ENCODE measurements at regions of chr1 and their contacts with region 1.

Region 1: GRCh38 chr1:151098126-151098525 is 27.6 kb downstream of the GABPB2 start:
- DNase-seq: no peak
- H3K4me3 Mint-ChIP-seq: no peak overlapping the region
- H3K27ac Mint-ChIP-seq: no peak overlapping the region
- H3K4me1 Mint-ChIP-seq: peaks cover 10% of the 10 kb centered on the region
- H3K27me3 Mint-ChIP-seq: no peaks in the 10 kb centered on the region
- CTCF ChIP-seq: no peak

Region 2: GRCh38 chr1:151013518-151013917 is 84.6 kb before region 1 on chr1:
- CTCF ChIA-PET with region 1: no interaction called
- POLR2A ChIA-PET with region 1: no interaction called
- intact Hi-C with region 1: no loop called
- DNase-seq: no peak
- H3K4me3 Mint-ChIP-seq: no peak overlapping the region
- H3K27ac Mint-ChIP-seq: no peak overlapping the region
- H3K4me1 Mint-ChIP-seq: peaks cover 7% of the 10 kb centered on the region
- H3K27me3 Mint-ChIP-seq: no peaks in the 10 kb centered on the region
- CTCF ChIP-seq: no peak

Region 3: DNA sequence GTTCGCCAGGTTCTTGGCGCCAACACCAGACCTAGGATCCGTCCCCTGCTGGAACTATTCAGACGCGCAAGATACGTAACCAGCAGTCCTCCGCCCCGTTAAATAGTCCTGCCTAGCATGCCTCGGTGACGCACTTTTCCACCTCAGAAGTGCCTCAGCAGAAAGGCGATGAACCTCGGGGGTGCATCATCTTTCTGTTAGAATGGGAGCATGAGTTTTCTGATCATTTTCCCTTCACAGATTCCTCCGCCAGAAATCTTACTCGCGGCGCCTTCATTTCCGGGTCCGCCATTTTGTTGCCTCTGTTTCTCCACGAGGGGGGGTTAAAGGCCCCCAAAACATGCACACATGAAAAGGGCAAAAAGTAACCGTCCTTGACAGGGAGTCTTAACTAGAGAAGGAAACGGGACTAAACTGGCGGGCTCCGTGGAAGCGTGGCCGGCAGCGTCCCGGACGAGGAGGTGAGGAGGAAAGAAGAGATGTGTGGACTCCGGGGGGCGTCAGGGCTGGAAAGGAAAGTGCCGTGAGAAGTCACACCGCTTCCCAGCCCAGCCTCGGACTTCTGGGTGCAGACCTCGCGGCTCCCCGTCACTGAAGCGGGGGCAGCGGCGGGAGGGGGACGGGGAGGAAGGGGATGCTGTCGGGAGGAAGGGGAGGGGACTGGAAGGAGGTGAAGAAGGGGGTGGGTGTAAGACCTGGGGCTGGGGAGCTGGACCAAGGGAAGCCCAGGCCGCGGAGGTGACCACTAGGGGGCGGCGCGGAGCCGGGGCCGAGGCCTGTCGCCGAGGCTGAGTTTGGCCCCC is 27.5 kb before region 1 on chr1 and contains the start of gene GABPB2:
- CTCF ChIA-PET with region 1: interaction called, 10 read pairs
- POLR2A ChIA-PET with region 1: interaction called, 4 read pairs
- intact Hi-C with region 1: no loop called
- DNase-seq: peak; percentile 98
- H3K4me3 Mint-ChIP-seq: peak within 1 kb of the TSS; percentile 100
- H3K27ac Mint-ChIP-seq: peak within 1 kb of the TSS; percentile 100
- H3K4me1 Mint-ChIP-seq: no peaks in the 10 kb centered on the region
- H3K27me3 Mint-ChIP-seq: no peaks in the 10 kb centered on the region
- CTCF ChIP-seq: peak; percentile 99
- total RNA-seq, gene GABPB2: 20.2 and 22.9 TPM in 2 replicates

Region 4: GRCh38 chr1:151124763-151125403 is 26.8 kb after region 1 on chr1:
- CTCF ChIA-PET with region 1: interaction called, 13 read pairs
- POLR2A ChIA-PET with region 1: no interaction called
- intact Hi-C with region 1: no loop called
- DNase-seq: no peak
- H3K4me3 Mint-ChIP-seq: no peak overlapping the region
- H3K27ac Mint-ChIP-seq: no peak overlapping the region
- H3K4me1 Mint-ChIP-seq: no peaks in the 10 kb centered on the region
- H3K27me3 Mint-ChIP-seq: no peaks in the 10 kb centered on the region
- CTCF ChIP-seq: no peak

Region 5: DNA sequence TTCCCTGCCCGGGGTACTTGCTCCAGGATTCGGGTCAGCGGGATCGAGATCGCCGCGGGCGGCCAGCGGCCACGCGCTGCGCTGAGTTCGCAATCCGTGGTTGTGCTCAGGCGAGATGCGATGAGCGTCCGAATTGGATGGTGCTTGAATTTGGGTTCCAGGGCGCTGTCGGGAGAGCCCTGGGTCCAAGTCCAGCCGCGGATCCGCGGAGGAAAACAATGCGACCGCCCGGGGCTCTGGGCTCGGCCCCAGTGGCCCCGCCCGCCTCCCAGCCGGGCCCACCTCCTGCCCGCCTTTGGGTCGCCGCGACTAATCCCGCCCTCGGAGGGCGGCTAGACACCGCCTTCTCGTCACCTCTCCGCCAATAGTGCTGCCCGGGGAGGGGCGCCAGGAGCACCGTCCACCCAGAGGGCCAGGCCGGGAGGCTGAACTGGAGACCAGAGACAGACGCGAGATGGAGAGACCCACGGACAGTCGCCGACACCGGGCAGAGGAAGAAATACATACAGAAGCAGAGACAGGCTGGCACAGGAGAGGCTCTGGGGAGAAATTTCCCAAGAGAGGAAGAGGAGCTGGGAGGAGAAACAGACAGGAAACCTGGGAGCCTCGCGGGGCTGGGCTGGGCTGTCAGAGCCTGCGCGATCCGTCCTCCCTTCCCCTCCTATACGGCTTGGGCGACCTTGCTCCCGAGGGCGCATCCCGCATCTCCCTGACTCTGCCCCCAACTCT is 48.5 kb after region 1 on chr1 and contains the start of gene SEMA6C:
- CTCF ChIA-PET with region 1: interaction called, 15 read pairs
- POLR2A ChIA-PET with region 1: interaction called, 3 read pairs
- intact Hi-C with region 1: no loop called
- DNase-seq: peak; percentile 96
- H3K4me3 Mint-ChIP-seq: peak within 1 kb of the TSS; percentile 73
- H3K27ac Mint-ChIP-seq: peak within 1 kb of the TSS; percentile 13
- H3K4me1 Mint-ChIP-seq: peaks cover 10% of the 10 kb centered on the region
- H3K27me3 Mint-ChIP-seq: no peaks in the 10 kb centered on the region
- CTCF ChIP-seq: no peak
- total RNA-seq, gene SEMA6C: 2.3 and 9.5 TPM in 2 replicates

Region 6: DNA sequence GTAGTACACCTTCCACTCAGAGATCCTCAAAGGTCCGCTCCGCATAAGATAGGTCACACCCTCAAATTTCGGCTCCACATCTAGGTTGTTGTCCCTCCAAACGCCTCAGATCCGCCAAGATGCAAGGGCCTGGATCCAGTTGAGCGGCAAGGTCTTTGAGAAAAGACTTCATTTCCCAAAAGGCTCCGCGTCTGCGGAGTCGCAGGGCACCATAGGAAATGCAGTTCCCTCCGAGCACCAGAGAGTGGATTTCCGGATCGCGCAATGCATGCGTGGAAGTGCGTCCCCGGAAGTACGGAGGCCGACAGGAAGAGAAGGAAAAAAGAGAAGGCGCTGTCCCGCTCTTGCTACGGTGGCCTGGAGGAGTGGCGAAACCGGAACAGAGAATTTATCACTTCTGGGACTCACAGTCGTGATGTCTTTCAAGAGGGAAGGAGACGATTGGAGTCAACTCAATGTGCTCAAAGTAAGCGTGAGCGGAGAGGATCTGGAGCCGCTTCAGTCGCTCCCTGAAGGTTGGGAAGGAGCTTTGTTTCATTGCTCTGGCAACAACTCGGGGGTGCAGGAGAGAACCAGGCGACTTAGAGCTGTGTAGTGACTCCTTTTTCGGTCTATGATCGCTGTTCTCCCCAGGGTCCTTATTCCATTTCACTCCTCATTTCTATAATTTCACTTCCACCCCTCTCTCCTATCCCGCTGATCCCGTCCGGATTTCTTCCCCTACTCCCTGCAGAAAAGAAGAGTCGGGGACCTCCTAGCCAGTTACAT is 67.8 kb after region 1 on chr1 and contains the starts of genes LYSMD1 and SCNM1:
- CTCF ChIA-PET with region 1: interaction called, 12 read pairs
- POLR2A ChIA-PET with region 1: interaction called, 4 read pairs
- intact Hi-C with region 1: no loop called
- DNase-seq: peak; percentile 100
- H3K4me3 Mint-ChIP-seq: peak within 1 kb of the TSS; percentile 87
- H3K27ac Mint-ChIP-seq: peak within 1 kb of the TSS; percentile 97
- H3K4me1 Mint-ChIP-seq: peaks cover 25% of the 10 kb centered on the region
- H3K27me3 Mint-ChIP-seq: no peaks in the 10 kb centered on the region
- CTCF ChIP-seq: no peak
- total RNA-seq, gene LYSMD1: 14.4 and 22.3 TPM in 2 replicates
- total RNA-seq, gene SCNM1: 88.5 and 93.0 TPM in 2 replicates

Region 7: GRCh38 chr1:151309811-151310323 is 211.7 kb after region 1 on chr1:
- CTCF ChIA-PET with region 1: no interaction called
- POLR2A ChIA-PET with region 1: no interaction called
- intact Hi-C with region 1: no loop called
- DNase-seq: no peak
- H3K4me3 Mint-ChIP-seq: no peak overlapping the region
- H3K27ac Mint-ChIP-seq: no peak overlapping the region
- H3K4me1 Mint-ChIP-seq: peaks cover 32% of the 10 kb centered on the region
- H3K27me3 Mint-ChIP-seq: no peaks in the 10 kb centered on the region
- CTCF ChIP-seq: no peak

Measured in MCF 10A (cell line).